Right ventricle myocardium inferior (tissue), 1 donor: ENCODE measurements at regions of chr17 and their contacts with region 1.

Region 1: GRCh38 chr17:12229335-12229734 is 208.7 kb downstream of the MAP2K4 start:
- DNase-seq: no peak
- ATAC-seq: no peak

Region 2: DNA sequence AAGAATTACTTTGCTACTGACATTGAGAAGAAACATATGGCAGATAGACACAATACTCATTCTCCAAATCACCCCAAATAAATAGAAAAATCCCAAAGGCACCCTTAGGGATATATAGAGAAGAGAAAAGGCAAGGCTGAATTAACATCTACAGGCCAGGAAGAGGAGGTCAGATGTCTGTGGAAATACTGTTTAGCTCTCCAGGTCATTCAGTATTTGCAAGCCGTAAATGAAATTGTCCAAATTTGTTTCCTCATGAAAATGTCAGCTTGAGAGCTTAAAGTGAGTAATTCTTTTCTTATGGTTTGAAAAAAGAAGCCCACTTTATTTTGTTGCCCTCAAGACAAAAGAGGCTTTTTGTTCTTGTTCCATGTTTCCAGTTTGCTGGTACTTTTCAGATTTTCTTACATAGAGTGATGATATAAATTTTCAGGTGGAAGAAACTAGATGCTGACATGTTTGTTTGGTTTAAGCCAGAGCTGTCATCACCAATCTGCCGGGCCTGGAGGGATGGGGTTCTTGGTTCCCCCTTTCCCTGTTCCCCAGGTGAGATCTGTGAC is 19.6 kb before region 1 on chr17:
- intact Hi-C with region 1: loop called (anchors 1 kb)
- DNase-seq: no peak
- ATAC-seq: no peak